OCI-LY7 (cell line): ENCODE measurements at regions of chr3 and their contacts with region 1.

Region 1: GRCh38 chr3:27326629-27327545 is 42.3 kb downstream of the NEK10 start:
- DNase-seq: no peak
- H3K4me3 ChIP-seq: no peak overlapping the region
- H3K27ac ChIP-seq: no peak overlapping the region
- H3K4me1 ChIP-seq: no peaks in the 10 kb centered on the region
- CTCF ChIP-seq: no peak

Region 2: GRCh38 chr3:27293949-27294348 is 32.9 kb before region 1 on chr3:
- CTCF ChIA-PET with region 1: no interaction called
- POLR2A ChIA-PET with region 1: no interaction called
- intact Hi-C with region 1: loop called (anchors 1 kb)
- DNase-seq: no peak
- H3K4me3 ChIP-seq: no peak overlapping the region
- H3K27ac ChIP-seq: no peak overlapping the region
- H3K4me1 ChIP-seq: no peaks in the 10 kb centered on the region
- CTCF ChIP-seq: no peak